ENCODE measurements at regions of chr15 and their contacts with region 1.

Region 1: DNA sequence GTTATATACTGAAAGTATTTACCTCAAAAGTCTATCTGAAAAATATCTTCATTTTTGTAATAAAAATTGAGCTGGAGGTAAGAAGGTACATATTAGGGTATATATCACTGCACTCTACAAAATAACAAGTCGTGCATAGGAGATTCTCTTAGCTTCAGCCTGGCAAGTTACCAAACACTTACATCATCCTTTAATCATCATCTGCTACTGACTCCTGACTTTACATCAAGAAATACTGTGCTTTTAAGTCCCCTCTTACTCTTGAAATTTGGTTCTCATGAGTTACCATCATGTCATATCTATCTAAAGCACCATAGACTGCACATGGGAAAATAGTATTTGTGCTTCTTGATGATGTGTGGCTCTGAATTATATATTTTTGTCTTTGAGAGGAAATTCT is 50.8 kb downstream of the LYSMD4 start:
- DNase-seq: no peak
- H3K4me3 ChIP-seq: no peak overlapping the region
- H3K27ac ChIP-seq: peak overlapping the region; percentile 84
- H3K4me1 ChIP-seq: peaks cover 46% of the 10 kb centered on the region
- H3K27me3 ChIP-seq: no peaks in the 10 kb centered on the region
- CTCF ChIP-seq: no peak

Region 2: GRCh38 chr15:99264125-99264524 is 418.3 kb before region 1 on chr15:
- intact Hi-C with region 1: no loop called
- DNase-seq: no peak
- H3K4me3 ChIP-seq: no peak overlapping the region
- H3K27ac ChIP-seq: no peak overlapping the region
- H3K4me1 ChIP-seq: no peaks in the 10 kb centered on the region
- H3K27me3 ChIP-seq: no peaks in the 10 kb centered on the region
- CTCF ChIP-seq: no peak

Region 3: GRCh38 chr15:99578809-99579208 is 103.6 kb before region 1 on chr15:
- intact Hi-C with region 1: loop called (anchors 10 kb)
- DNase-seq: no peak
- H3K4me3 ChIP-seq: peak overlapping the region; percentile 3
- H3K27ac ChIP-seq: no peak overlapping the region
- H3K4me1 ChIP-seq: peaks cover 99% of the 10 kb centered on the region
- H3K27me3 ChIP-seq: no peaks in the 10 kb centered on the region
- CTCF ChIP-seq: no peak

Region 4: GRCh38 chr15:99605490-99605931 is 76.9 kb before region 1 on chr15:
- intact Hi-C with region 1: no loop called
- DNase-seq: no peak
- H3K4me3 ChIP-seq: no peak overlapping the region
- H3K27ac ChIP-seq: peak overlapping the region; percentile 11
- H3K4me1 ChIP-seq: peaks cover 87% of the 10 kb centered on the region
- H3K27me3 ChIP-seq: no peaks in the 10 kb centered on the region
- CTCF ChIP-seq: no peak

Region 5: DNA sequence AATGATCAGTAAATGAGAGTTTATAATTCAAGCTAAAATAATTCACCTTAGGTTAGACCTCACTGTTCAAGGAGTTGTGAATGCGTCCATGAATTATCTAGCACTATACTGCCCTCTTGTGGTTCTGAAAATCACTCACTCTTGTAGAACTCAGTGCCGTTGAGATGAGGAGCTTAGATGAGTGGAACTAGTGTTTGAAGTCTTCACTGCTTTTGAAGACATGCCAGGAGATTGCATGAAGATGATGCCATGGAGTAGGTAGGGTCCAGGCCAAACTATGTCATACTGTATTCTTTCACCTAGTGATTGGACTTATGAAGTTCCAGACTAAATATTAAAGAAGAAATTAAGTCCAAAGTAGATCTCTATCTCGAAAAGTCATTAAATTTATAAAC is 22.0 kb after region 1 on chr15:
- intact Hi-C with region 1: no loop called
- DNase-seq: no peak
- H3K4me3 ChIP-seq: peak overlapping the region; percentile 37
- H3K27ac ChIP-seq: peak overlapping the region; percentile 90
- H3K4me1 ChIP-seq: peaks cover 71% of the 10 kb centered on the region
- H3K27me3 ChIP-seq: no peaks in the 10 kb centered on the region
- CTCF ChIP-seq: peak; percentile 82